PC-9 (cell line): ENCODE measurements at regions of chr5 and their contacts with region 1.

Region 1: GRCh38 chr5:43008369-43009153 is 31.6 kb downstream of the ANXA2R start:
- DNase-seq: peak; percentile 94 to 98
- H3K4me3 ChIP-seq: peak overlapping the region; percentile 58
- H3K27ac ChIP-seq: peak overlapping the region; percentile 85
- H3K4me1 ChIP-seq: peaks cover 15% of the 10 kb centered on the region
- H3K27me3 ChIP-seq: no peaks in the 10 kb centered on the region
- CTCF ChIP-seq: peak; percentile 18; the same call in 1 of the 2 replicates

Region 2: DNA sequence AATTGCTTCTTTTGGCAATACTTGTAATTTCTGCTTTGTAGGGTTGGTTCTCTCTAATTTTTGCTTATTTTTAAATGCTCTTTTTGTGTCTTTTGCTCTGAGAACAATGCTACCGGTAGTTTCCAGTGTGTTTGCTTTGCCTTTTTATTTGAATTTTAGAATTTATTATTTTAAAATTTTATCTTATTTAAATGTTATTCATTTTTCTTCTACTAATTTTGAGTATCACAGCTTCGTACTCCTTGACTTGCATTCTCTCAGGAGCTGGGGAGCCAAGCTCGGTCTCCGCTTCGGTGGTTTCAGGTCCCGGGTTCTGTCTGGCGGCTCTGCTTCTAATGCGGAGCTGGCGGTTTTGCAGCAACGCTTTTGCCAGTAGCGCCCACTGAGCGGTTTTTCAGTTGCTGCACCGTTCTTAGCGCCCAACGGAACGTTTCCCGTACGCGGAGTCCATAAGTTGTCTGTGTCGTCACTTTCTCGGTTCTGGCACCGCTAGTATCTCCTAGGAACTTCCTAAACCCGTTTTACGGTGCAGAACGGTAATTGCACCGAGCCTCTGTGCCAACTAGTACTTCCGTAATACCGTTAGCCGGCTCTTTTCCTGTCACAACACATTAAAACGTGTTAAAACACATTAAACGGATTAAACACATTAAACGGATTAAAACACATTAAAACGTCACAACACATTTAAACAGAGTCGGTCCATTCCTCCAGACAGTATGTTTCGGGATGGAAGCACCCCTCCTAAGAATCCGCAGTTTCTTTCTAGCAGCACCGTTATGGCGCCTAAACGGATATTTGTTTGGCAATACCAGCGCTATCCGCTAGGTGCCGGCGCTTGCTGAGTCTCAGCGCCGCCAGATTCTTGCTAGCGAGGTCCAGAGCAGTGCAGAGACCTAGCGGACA is 14.1 kb before region 1 on chr5:
- CTCF ChIA-PET with region 1: interaction called, 5 read pairs
- POLR2A ChIA-PET with region 1: interaction called, 4 read pairs
- intact Hi-C with region 1: loop called (anchors 1 kb)
- DNase-seq: no peak
- H3K4me3 ChIP-seq: no peak overlapping the region
- H3K27ac ChIP-seq: no peak overlapping the region
- H3K4me1 ChIP-seq: peaks cover 6% of the 10 kb centered on the region
- H3K27me3 ChIP-seq: no peaks in the 10 kb centered on the region
- CTCF ChIP-seq: no peak

Region 3: GRCh38 chr5:43019614-43020293 is 11.2 kb after region 1 on chr5:
- CTCF ChIA-PET with region 1: interaction called, 7 read pairs
- POLR2A ChIA-PET with region 1: no interaction called
- intact Hi-C with region 1: loop called (anchors 1 kb)
- DNase-seq: peak; percentile 80 to 83
- H3K4me3 ChIP-seq: peak overlapping the region; percentile 50
- H3K27ac ChIP-seq: no peak overlapping the region
- H3K4me1 ChIP-seq: no peaks in the 10 kb centered on the region
- H3K27me3 ChIP-seq: no peaks in the 10 kb centered on the region
- CTCF ChIP-seq: peak; percentile 61; the same call in 1 of the 2 replicates

Region 4: GRCh38 chr5:43040287-43041098 is 31.9 kb after region 1 on chr5 and contains the start of gene ANXA2R:
- CTCF ChIA-PET with region 1: interaction called, 7 read pairs
- POLR2A ChIA-PET with region 1: interaction called, 5 read pairs
- intact Hi-C with region 1: loop called (anchors 1 kb)
- DNase-seq: peak; percentile 94 to 97
- H3K4me3 ChIP-seq: peak within 1 kb of the TSS; percentile 76
- H3K27ac ChIP-seq: peak within 1 kb of the TSS; percentile 60
- H3K4me1 ChIP-seq: peaks cover 1% of the 10 kb centered on the region; the same call in 1 of the 2 replicates
- H3K27me3 ChIP-seq: no peaks in the 10 kb centered on the region
- CTCF ChIP-seq: peak; percentile 99
- total RNA-seq, gene ANXA2R: 3.6 and 6.3 TPM in 2 replicates

Region 5: DNA sequence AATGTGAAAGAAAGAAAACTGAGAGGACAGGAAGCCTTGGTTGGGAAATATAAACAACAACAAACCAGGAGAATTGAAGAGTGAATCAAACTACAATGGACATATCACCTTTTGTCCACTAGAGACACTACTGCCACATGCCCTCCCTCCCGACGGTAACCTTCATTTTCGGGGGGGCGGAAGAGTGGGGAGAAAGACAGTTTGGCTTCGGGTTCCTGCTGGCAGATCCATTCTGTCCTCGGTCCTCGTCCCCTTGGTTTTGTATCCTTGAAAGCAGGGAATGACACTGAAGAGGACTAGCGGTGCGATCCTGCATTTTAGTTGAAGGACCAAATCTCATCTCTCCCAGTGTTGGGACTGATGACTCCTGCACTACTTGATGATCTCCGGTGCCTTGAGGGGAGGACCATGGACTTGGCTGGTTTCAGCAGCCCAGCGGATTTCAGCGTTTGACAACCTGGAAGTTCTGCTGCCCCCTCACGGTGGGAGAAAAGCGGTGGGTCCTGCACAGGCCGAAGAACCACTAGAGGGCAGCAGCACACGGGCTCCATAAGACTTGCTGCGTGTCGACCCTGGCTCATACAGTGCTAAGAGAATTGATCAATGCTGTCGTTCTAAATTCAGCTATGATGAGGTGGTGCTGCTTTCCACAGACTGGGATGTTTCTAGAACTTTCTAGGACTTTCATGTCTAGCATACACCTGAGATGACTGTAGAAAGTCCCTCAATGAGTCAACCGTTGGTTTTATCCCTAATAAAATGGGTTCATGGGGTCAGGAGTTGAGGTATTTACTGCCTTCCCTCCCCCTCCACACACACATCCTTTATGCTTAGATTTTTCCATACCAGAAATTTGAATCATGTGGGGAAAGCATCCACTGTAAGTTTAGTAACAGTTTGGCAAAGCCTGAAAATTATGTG is 97.1 kb after region 1 on chr5:
- CTCF ChIA-PET with region 1: no interaction called
- POLR2A ChIA-PET with region 1: no interaction called
- intact Hi-C with region 1: loop called (anchors 1 kb)
- DNase-seq: peak; percentile 90 to 96
- H3K4me3 ChIP-seq: peak overlapping the region; percentile 51
- H3K27ac ChIP-seq: no peak overlapping the region
- H3K4me1 ChIP-seq: peaks cover 8% of the 10 kb centered on the region; the same call in 1 of the 2 replicates
- H3K27me3 ChIP-seq: no peaks in the 10 kb centered on the region
- CTCF ChIP-seq: peak; percentile 100

Region 6: DNA sequence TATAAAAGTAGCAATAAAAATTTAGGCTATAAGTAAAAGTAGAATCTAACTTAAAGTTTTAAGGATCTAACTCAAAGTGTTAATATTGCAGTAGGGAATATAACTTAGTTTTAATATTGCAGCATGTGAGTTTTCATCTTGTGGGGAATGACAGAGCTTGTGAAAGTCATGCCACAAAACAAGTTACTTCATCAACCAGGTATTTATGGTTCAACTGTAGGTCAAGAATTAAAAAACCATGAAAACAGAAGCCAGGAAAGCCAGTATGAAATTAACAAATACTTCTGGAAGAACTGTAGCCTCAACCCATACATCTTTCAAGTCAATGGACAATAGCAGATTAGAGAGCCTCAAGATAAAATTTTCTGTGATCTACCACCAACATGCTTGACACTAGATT is 285.7 kb after region 1 on chr5:
- CTCF ChIA-PET with region 1: interaction called, 11 read pairs
- POLR2A ChIA-PET with region 1: no interaction called
- intact Hi-C with region 1: no loop called
- DNase-seq: peak in 1 of 2 experiments; percentile 71
- H3K4me3 ChIP-seq: no peak overlapping the region
- H3K27ac ChIP-seq: peak overlapping the region; percentile 38
- H3K4me1 ChIP-seq: peaks cover 15% of the 10 kb centered on the region
- H3K27me3 ChIP-seq: no peaks in the 10 kb centered on the region
- CTCF ChIP-seq: no peak